Left lung (tissue), 14 donors: ENCODE measurements at regions of chr1 and their contacts with region 1.

Region 1: DNA sequence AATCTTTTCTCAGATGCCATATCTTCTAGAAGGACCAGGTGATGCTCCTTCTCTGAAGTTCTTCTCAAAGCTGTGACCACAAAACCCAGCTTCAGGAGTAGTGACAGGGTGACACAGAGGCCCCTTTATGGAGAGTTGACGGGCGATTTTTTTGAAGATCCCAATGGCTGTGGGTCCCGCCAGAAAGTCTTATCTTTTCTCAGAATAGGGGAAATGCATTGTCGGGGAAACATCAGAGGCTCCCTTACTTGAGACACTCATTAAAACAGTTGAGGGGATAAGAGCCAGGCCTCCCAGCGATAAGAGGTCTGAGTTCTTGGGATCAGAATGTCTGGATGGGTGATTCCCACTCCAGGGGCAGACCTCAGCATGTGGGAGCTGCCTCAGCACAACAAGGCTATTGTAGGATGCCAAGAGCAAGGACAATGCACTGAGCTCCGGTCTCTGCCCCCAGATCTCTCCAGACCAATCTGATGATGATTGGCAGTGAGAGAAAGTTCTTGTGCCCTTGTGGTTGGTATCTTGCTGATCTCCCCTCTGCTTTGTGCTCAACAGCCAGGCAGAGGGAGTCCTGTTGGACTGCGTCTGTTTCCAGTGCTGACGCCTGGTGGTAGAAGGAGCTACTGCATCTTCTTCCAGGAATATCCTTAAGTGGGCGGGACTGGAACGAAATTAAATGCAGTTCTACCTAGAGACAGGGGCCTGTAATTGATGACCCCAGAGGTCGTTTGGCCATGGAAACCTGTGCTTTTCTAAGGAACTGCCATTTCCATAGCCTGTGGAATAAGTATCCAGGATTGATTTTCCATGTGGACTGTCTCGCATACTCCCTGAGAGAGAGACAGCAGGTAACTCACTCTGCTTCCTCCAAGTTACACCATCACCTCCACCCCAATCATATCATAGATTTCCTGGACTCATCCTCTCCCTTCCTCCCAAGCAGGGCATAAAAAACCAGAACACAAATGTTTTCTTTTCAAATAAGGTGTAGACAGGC is 6.8 kb upstream of the ACKR1 start:
- DNase-seq: peak in 2 of 4 donors; percentile 56 to 77
- ATAC-seq: peak; percentile 95
- H3K4me3 ChIP-seq: no peak overlapping the region
- H3K27ac ChIP-seq: no peak overlapping the region
- H3K4me1 ChIP-seq: peaks cover 0 to 2% of the 10 kb centered on the region in 2 donors
- H3K27me3 ChIP-seq: peaks cover 0 to 13% of the 10 kb centered on the region in 2 donors
- CTCF ChIP-seq: peak; percentile 77 to 82

Region 2: DNA sequence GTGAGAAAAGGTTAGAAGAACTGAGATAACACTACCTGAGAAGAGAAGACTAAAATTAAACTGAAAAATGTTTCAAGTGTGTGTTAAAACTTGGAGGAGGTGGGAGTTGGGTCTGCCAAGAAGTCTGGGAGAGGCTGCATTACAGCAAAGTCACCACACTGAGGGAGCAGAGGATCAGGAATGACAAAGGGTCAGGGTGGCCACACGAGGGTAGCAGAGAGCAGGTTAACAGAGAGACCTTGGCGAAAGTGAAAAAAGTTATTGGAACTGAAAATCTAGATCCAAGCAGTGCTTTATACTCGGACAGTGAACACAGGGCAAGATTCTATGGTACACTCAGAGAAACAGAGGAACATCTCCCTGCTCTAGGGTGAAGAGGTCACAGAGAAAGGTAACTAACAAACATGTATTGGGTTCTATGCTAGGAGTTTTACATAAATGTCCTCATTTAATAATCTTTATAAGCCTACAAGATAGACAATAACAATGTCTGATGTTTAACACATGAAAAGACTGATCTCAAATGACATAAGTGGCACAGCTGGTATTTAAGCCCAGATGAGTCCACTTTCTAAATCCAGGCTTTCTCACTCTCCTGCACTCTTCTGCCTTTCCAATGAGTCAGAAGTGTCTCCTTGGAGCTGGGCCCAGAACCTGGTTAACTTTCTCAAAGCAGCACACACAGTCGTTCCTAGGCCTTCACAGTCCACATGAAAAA is 36.7 kb before region 1 on chr1:
- intact Hi-C with region 1: loop called in 1 of 2 experiments (anchors 5 kb)
- DNase-seq: peak in 3 of 4 donors; percentile 66 to 82 (median 71)
- ATAC-seq: peak; percentile 100
- H3K4me3 ChIP-seq: no peak overlapping the region
- H3K27ac ChIP-seq: no peak overlapping the region
- H3K4me1 ChIP-seq: no peaks in the 10 kb centered on the region
- H3K27me3 ChIP-seq: peaks cover 0 to 49% of the 10 kb centered on the region in 2 donors
- CTCF ChIP-seq: peak; percentile 89 to 95

Region 3: DNA sequence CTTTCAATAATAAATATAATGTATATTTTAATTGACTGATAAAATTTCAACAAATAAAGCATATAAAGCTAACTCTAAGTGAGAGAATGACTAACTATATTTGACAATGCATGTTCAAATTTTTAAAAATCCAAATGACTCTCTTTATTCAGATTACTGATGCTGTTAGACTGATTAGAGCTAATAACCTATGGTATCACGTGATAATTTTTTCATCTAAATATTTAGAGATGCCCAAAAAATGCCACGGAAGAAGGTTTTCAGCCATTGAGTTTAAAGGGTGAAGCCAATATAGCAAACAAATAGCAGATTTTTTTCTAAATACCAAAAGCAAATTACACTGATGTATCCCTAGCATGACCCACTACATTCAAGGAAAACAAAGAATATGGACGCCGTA is 173.0 kb after region 1 on chr1:
- intact Hi-C with region 1: no loop called
- DNase-seq: no peak
- ATAC-seq: no peak
- H3K4me3 ChIP-seq: no peak overlapping the region
- H3K27ac ChIP-seq: no peak overlapping the region
- H3K4me1 ChIP-seq: no peaks in the 10 kb centered on the region
- H3K27me3 ChIP-seq: no peaks in the 10 kb centered on the region
- CTCF ChIP-seq: no peak